ENCODE measurements at regions of chr5 and their contacts with region 1.

Region 1: GRCh38 chr5:36305571-36306326 is 4.0 kb upstream of the RANBP3L start:
- DNase-seq: peak; percentile 28 to 68 (median 47)
- H3K4me3 ChIP-seq: peak overlapping the region in 5 of 59 donors; percentile 3 to 19 (median 9)
- H3K27ac ChIP-seq: peak overlapping the region in 27 of 59 donors; percentile 9 to 80 (median 38)
- H3K27me3 ChIP-seq: no peaks in the 10 kb centered on the region
- CTCF ChIP-seq: peak; percentile 37 to 85 (median 70)

Region 2: GRCh38 chr5:36079200-36079761 is 226.5 kb before region 1 on chr5:
- intact Hi-C with region 1: loop called in 1 of 2 experiments (anchors 10 kb)
- DNase-seq: peak in 1 of 10 donors; percentile 12
- H3K4me3 ChIP-seq: peak overlapping the region in 18 of 59 donors; percentile 2 to 39 (median 28)
- H3K27ac ChIP-seq: no peak overlapping the region
- H3K27me3 ChIP-seq: peaks cover 0 to 16% (median 0%) of the 10 kb centered on the region in 45 donors
- CTCF ChIP-seq: peak in 55 of 56 donors; percentile 26 to 75 (median 61)

Region 3: GRCh38 chr5:36177715-36178523 is 127.8 kb before region 1 on chr5:
- intact Hi-C with region 1: loop called (anchors 10 kb)
- DNase-seq: no peak
- H3K4me3 ChIP-seq: no peak overlapping the region
- H3K27ac ChIP-seq: peak overlapping the region in 55 of 59 donors; percentile 5 to 93 (median 71)
- H3K27me3 ChIP-seq: no peaks in the 10 kb centered on the region
- CTCF ChIP-seq: peak; percentile 39 to 78 (median 62)

Region 4: GRCh38 chr5:36264202-36264760 is 41.5 kb before region 1 on chr5:
- intact Hi-C with region 1: loop called in 1 of 2 experiments (anchors 2 kb)
- DNase-seq: no peak
- H3K4me3 ChIP-seq: no peak overlapping the region
- H3K27ac ChIP-seq: peak overlapping the region in 2 of 59 donors; percentile 24 to 31
- H3K27me3 ChIP-seq: no peaks in the 10 kb centered on the region
- CTCF ChIP-seq: no peak

Measured in dorsolateral prefrontal cortex (tissue), 120 donors.